ENCODE measurements at regions of chrX and their contacts with region 1.

Region 1: GRCh38 chrX:12901486-12901885 is 4.9 kb upstream of the TLR8 start:
- DNase-seq: peak; percentile 28 to 65 (median 54)
- ATAC-seq: peak; percentile 68
- H3K4me3 ChIP-seq: no peak overlapping the region
- H3K4me3 Mint-ChIP-seq: peak overlapping the region in 2 of 10 donors; percentile 1 to 72
- H3K27ac ChIP-seq: no peak overlapping the region
- H3K27ac Mint-ChIP-seq: peak overlapping the region in 1 of 9 donors; percentile 57
- H3K4me1 ChIP-seq: no peaks in the 10 kb centered on the region
- H3K4me1 Mint-ChIP-seq: peaks cover 3 to 11% (median 5%) of the 10 kb centered on the region in 7 donors
- H3K27me3 ChIP-seq: no peaks in the 10 kb centered on the region
- H3K27me3 Mint-ChIP-seq: no peaks in the 10 kb centered on the region

Region 2: GRCh38 chrX:12701628-12702027 is 199.9 kb before region 1 on chrX:
- CTCF ChIA-PET with region 1: interaction called, 3 read pairs
- POLR2A ChIA-PET with region 1: no interaction called
- intact Hi-C with region 1: loop called in 1 of 2 experiments (anchors 2 kb)
- DNase-seq: peak in 2 of 9 donors; percentile 5 to 21
- ATAC-seq: no peak
- H3K4me3 ChIP-seq: no peak overlapping the region
- H3K4me3 Mint-ChIP-seq: no peak overlapping the region
- H3K27ac ChIP-seq: no peak overlapping the region
- H3K27ac Mint-ChIP-seq: peak overlapping the region in 1 of 9 donors; percentile 60
- H3K4me1 ChIP-seq: no peaks in the 10 kb centered on the region
- H3K4me1 Mint-ChIP-seq: peaks cover 0 to 4% (median 0%) of the 10 kb centered on the region in 7 donors
- H3K27me3 ChIP-seq: no peaks in the 10 kb centered on the region
- H3K27me3 Mint-ChIP-seq: peaks cover 5 to 14% (median 9%) of the 10 kb centered on the region in 5 donors

Region 3: DNA sequence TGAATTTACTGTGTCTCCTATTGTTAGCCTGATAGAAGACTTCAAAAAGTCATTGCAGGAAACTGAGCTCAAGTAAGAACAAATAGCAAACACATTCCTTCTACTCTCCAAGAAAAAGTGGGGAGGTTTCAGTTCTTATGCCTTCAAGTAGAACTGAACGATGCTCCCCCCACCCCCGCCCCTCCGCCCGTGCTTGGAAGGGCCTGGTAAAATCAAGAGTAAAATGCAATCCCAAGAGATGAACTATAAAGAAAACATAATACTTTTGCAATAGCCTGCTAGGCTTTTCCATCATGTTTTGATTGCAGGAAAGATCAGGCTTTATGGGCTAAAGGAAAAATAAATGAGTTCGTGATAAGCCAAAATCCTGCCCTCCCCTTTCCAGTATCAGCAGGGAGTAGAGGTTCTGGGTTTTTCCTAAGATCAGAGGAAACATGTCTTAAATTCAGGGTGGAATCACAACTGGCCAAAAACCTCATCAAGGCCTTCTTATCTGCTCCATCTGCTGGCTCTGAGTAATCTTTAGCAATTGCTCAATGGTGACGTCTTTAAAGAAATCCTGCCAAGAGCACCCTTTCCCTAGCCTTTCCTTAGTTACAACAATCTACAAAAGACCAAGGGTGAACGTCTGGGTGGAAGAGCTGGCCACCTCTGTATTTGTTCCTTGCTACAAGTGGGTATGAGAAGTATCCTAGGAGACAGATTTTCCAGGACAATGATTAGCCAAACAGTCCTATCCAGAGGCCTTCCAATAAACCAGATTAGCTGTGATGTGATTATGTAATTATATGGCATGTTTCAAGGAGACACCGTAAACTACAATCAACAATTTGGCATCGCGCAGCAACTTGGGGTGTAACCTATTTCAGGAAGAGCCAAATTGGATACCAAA is 209.2 kb after region 1 on chrX:
- CTCF ChIA-PET with region 1: no interaction called
- POLR2A ChIA-PET with region 1: no interaction called
- intact Hi-C with region 1: no loop called
- DNase-seq: no peak
- ATAC-seq: no peak
- H3K4me3 ChIP-seq: no peak overlapping the region
- H3K4me3 Mint-ChIP-seq: no peak overlapping the region
- H3K27ac ChIP-seq: no peak overlapping the region
- H3K27ac Mint-ChIP-seq: no peak overlapping the region
- H3K4me1 ChIP-seq: no peaks in the 10 kb centered on the region
- H3K4me1 Mint-ChIP-seq: peaks cover 0 to 8% (median 4%) of the 10 kb centered on the region in 7 donors
- H3K27me3 ChIP-seq: no peaks in the 10 kb centered on the region
- H3K27me3 Mint-ChIP-seq: no peaks in the 10 kb centered on the region

Region 4: GRCh38 chrX:13487731-13488523 is 586.4 kb after region 1 on chrX:
- CTCF ChIA-PET with region 1: interaction called, 3 read pairs
- POLR2A ChIA-PET with region 1: interaction called, 3 read pairs
- intact Hi-C with region 1: loop called in 1 of 2 experiments (anchors 1 kb)
- DNase-seq: peak in 8 of 9 donors; percentile 22 to 73 (median 52)
- ATAC-seq: peak; percentile 79
- H3K4me3 ChIP-seq: no peak overlapping the region
- H3K4me3 Mint-ChIP-seq: peak overlapping the region in 2 of 10 donors; percentile 11 to 48
- H3K27ac ChIP-seq: no peak overlapping the region
- H3K27ac Mint-ChIP-seq: peak overlapping the region in 8 of 9 donors; percentile 23 to 87 (median 64)
- H3K4me1 ChIP-seq: peaks cover 11 to 27% of the 10 kb centered on the region in 2 donors
- H3K4me1 Mint-ChIP-seq: peaks cover 4 to 39% (median 27%) of the 10 kb centered on the region in 7 donors
- H3K27me3 ChIP-seq: no peaks in the 10 kb centered on the region
- H3K27me3 Mint-ChIP-seq: no peaks in the 10 kb centered on the region